Panc1 (cell line): ENCODE measurements at regions of chr6 and their contacts with region 1.

Region 1: GRCh38 chr6:5486214-5486613 is 224.9 kb downstream of the FARS2 start:
- DNase-seq: no peak
- ATAC-seq: no peak
- H3K4me3 ChIP-seq: no peak overlapping the region
- H3K27ac ChIP-seq: no peak overlapping the region
- H3K4me1 ChIP-seq: no peaks in the 10 kb centered on the region
- H3K27me3 ChIP-seq: no peaks in the 10 kb centered on the region
- CTCF ChIP-seq: no peak

Region 2: GRCh38 chr6:5389086-5389745 is 97.0 kb before region 1 on chr6:
- CTCF ChIA-PET with region 1: no interaction called
- POLR2A ChIA-PET with region 1: no interaction called
- in situ Hi-C with region 1: no loop called
- intact Hi-C with region 1: no loop called
- DNase-seq: no peak
- ATAC-seq: no peak
- H3K4me3 ChIP-seq: no peak overlapping the region
- H3K27ac ChIP-seq: no peak overlapping the region
- H3K4me1 ChIP-seq: no peaks in the 10 kb centered on the region
- H3K27me3 ChIP-seq: no peaks in the 10 kb centered on the region
- CTCF ChIP-seq: no peak

Region 3: DNA sequence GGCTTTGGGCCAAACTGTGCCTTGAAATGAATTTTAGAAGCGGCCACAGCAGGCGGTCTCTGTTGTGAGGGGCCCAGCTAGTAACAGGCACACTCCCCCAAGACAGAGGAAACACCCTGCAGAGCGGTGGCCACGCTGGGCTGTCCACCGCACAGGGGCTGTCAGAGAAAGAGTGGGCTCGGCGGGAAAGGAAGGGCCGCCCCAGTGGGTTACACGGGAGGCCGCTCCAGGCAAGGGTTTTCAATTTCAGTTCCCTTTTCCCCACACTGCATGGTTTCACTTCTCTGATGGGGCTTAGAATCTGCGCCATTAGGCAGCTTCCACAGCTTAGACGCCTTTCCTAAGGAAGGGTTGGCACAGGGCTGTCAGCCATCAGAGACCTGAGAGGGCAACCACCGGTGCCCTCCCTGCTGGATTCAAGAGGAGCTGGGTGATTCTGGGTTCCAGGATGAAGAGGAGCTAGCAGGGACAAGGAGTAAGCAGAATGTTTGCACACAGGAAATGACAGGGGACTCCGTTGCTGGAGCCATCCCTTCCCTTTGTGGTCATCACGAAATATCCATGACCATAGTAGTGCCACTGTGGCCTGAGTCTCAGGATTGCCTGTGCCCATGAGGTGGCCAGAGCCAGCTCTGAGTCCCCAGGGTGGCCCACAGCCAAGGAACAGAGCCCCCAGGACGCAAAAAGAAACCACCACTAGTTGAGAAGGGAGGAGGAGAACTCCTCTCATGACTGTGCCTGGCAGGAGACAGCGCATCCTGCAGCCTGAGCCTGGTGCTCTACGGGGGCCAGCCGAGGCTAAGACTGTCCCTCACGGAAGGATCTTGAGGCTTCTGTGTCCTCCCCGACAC is 237.9 kb after region 1 on chr6:
- CTCF ChIA-PET with region 1: interaction called, 10 read pairs
- POLR2A ChIA-PET with region 1: no interaction called
- in situ Hi-C with region 1: no loop called
- intact Hi-C with region 1: no loop called
- DNase-seq: no peak
- ATAC-seq: no peak
- H3K4me3 ChIP-seq: no peak overlapping the region
- H3K27ac ChIP-seq: no peak overlapping the region
- H3K4me1 ChIP-seq: no peaks in the 10 kb centered on the region
- H3K27me3 ChIP-seq: no peaks in the 10 kb centered on the region
- CTCF ChIP-seq: no peak